ENCODE measurements at regions of chr1 and their contacts with region 1.

Region 1: GRCh38 chr1:209989525-209989924 is 51.5 kb downstream of the SYT14 start:
- DNase-seq: no peak
- ATAC-seq: no peak
- H3K4me3 ChIP-seq: no peak overlapping the region
- H3K4me1 ChIP-seq: no peaks in the 10 kb centered on the region
- CTCF ChIP-seq: no peak

Region 2: GRCh38 chr1:209860293-209860881 is 129.1 kb before region 1 on chr1:
- intact Hi-C with region 1: loop called in 1 of 2 experiments (anchors 5 kb)
- DNase-seq: peak; percentile 58 to 84 (median 64)
- ATAC-seq: peak; percentile 84
- H3K4me3 ChIP-seq: no peak overlapping the region
- H3K4me1 ChIP-seq: no peaks in the 10 kb centered on the region
- CTCF ChIP-seq: peak; percentile 71